ENCODE measurements at regions of chr17 and their contacts with region 1.

Region 1: DNA sequence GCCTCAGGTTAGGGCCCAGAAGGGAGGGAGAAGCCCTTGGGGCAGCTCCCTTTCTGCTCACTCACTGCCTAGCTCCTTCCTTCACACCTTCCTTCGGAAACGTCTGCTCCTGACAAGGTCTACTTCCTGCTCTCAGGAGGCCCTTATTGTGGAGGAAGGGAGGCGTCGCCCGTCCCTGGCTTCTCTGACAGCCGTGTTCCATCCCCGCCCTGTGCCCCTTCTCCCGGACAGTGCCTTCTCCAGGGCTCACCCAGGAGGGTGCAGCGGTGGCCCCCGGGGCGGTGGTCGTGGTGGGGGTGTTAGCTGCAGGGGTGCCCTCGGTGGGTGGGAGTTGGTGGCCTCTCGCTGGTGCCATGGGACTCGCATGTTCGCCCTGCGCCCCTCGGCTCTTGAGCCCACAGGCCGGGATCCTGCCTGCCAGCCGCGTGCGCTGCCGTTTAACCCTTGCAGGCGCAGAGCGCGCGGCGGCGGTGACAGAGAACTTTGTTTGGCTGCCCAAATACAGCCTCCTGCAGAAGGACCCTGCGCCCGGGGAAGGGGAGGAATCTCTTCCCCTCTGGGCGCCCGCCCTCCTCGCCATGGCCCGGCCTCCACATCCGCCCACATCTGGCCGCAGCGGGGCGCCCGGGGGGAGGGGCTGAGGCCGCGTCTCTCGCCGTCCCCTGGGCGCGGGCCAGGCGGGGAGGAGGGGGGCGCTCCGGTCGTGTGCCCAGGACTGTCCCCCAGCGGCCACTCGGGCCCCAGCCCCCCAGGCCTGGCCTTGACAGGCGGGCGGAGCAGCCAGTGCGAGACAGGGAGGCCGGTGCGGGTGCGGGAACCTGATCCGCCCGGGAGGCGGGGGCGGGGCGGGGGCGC is 231.9 kb downstream of the SEC14L1 start:
- DNase-seq: peak; percentile 89
- ATAC-seq: peak; percentile 43
- H3K4me3 Mint-ChIP-seq: peak overlapping the region; percentile 78
- H3K27ac Mint-ChIP-seq: peak overlapping the region; percentile 89
- H3K4me1 Mint-ChIP-seq: peaks cover 45% of the 10 kb centered on the region
- H3K27me3 Mint-ChIP-seq: no peaks in the 10 kb centered on the region

Region 2: GRCh38 chr17:77297693-77298666 is 74.7 kb before region 1 on chr17:
- POLR2A ChIA-PET with region 1: no interaction called
- DNase-seq: no peak
- ATAC-seq: no peak
- H3K4me3 Mint-ChIP-seq: no peak overlapping the region
- H3K27ac Mint-ChIP-seq: no peak overlapping the region
- H3K4me1 Mint-ChIP-seq: no peaks in the 10 kb centered on the region
- H3K27me3 Mint-ChIP-seq: peaks cover 3% of the 10 kb centered on the region

Region 3: DNA sequence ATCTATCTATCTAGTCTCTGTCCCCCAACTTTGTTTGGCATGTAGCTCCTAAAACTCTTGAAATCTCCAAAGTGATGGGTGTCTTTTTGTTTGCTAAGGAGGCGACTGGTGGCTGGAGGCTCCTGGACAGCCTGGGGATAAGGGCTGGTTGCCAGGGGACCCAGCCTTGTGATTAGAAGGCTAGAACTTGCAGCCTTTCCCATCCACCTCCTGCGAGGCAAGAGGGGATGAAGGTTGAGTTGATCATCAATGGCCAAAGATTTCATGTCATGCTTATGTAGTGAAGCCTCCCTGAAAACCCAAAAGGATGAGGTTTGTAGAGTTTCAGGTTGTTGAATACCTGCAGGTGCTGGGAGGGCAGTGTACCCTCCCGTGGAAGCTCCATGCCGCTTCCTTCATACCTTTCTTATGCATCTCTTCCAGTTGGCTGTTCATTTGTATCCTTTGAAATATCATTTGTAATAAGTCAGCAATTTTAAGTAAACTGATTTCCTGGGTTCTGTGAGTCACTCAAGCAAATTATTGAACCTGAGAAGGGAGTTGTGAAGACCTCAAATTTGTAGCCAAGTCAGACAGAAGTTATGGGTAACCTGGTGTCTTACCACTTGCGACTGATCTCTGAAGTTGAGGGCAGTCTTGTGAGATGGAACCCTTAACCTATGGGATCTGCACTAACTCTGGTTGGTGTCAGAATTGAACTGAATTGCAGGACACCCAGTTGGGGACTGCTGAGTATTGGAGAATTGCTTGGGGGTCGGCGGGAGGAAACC is 29.5 kb before region 1 on chr17:
- POLR2A ChIA-PET with region 1: interaction called, 17 read pairs
- DNase-seq: peak; percentile 20
- ATAC-seq: no peak
- H3K4me3 Mint-ChIP-seq: peak overlapping the region; percentile 72
- H3K27ac Mint-ChIP-seq: peak overlapping the region; percentile 93
- H3K4me1 Mint-ChIP-seq: peaks cover 41% of the 10 kb centered on the region
- H3K27me3 Mint-ChIP-seq: no peaks in the 10 kb centered on the region

Region 4: GRCh38 chr17:77391668-77392375 is 19.2 kb after region 1 on chr17:
- POLR2A ChIA-PET with region 1: interaction called, 84 read pairs
- DNase-seq: no peak
- ATAC-seq: peak; percentile 58
- H3K4me3 Mint-ChIP-seq: peak overlapping the region; percentile 56
- H3K27ac Mint-ChIP-seq: peak overlapping the region; percentile 81
- H3K4me1 Mint-ChIP-seq: peaks cover 69% of the 10 kb centered on the region
- H3K27me3 Mint-ChIP-seq: no peaks in the 10 kb centered on the region

Region 5: DNA sequence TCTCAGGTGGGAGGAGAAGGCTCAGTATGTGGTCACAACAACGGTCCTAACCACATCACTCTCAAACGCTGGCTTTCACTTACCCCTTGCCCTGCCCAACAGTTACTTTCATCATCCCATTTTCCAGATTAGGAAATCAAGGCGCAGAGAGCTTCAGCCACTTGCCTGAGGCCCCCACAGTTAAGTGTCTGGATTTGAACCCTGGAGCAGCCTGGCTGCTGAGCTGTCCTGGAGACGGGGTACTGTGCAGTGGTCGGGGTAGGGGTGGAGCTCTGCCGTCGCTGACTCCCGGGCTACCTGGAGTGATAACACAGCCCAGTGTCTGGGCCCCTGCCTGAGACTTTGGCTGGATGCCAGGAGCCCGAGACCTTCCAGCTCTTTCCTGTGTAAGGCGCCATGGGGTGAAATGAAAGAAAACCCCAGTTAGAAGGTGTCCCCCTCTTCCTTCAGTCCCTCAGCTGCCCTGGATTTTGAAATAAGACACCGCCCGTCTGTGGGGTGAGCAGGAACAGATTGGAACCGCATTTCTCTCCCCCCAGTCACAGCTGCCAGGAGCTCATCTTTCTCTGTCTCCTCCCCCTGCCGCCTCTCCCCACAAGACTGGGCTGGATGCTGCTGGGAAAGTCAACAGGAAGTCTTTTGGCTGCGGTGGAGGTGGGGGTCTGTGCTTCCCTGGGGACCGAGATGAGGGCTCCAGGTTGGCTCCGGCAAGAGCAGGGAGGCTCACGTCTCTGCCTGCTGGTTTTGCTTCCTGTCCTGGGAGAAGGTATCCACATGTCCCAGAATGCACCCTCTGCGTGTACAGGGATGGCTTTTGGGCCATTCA is 48.3 kb after region 1 on chr17:
- POLR2A ChIA-PET with region 1: interaction called, 11 read pairs
- DNase-seq: peak; percentile 64
- ATAC-seq: peak; percentile 48
- H3K4me3 Mint-ChIP-seq: peak overlapping the region; percentile 80
- H3K27ac Mint-ChIP-seq: peak overlapping the region; percentile 89
- H3K4me1 Mint-ChIP-seq: peaks cover 37% of the 10 kb centered on the region
- H3K27me3 Mint-ChIP-seq: no peaks in the 10 kb centered on the region